Endothelial cell of umbilical vein (primary cell): ENCODE measurements at regions of chr1 and their contacts with region 1.

Region 1: DNA sequence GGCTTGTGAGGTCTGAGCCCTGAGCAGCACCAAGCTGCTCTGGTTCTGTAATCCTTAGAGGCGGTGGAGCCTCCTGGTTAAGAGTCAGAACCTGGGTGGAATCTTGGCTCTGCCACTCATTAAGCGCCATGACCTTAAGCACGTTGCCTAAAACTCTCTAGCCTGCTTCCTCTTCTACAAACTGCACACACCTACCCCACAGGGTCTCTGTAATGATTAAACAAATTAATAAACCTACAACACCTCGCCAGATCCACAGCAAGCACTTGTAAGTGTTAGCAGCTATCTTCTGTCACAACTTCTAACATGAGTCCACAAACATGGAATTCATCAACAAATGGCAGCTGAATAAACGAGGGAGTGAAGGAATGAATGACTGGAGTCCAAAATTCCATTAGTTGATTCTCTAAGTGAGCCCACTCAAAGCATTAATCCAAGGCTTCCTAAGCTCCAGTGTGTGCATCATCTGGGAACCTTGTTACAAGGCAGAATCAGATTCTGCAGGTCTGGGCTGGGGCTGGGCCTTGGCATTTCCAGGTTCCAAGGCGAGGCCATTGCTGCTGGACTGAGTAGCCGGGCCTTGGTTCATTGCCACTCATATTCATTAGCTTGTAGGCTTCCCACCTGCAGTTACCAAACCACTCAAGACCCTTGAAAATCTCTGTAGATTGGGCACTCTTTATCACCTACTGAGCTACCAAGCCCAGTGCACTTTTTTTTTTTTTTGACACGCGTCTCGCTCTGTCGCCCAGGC is 168.6 kb downstream of the HIVEP3 start:
- DNase-seq: no peak
- H3K4me3 ChIP-seq: no peak overlapping the region
- H3K27ac ChIP-seq: no peak overlapping the region
- H3K4me1 ChIP-seq: peaks cover 12% of the 10 kb centered on the region
- H3K27me3 ChIP-seq: peaks cover 0 to 1% of the 10 kb centered on the region in 2 experiments
- CTCF ChIP-seq: no peak
- POLR2A ChIP-seq: no peak

Region 2: GRCh38 chr1:41474490-41475271 is 275.5 kb before region 1 on chr1:
- CTCF ChIA-PET with region 1: no interaction called
- POLR2A ChIA-PET with region 1: no interaction called
- dilution Hi-C with region 1: no loop called
- intact Hi-C with region 1: no loop called
- DNase-seq: no peak
- H3K4me3 ChIP-seq: no peak overlapping the region
- H3K27ac ChIP-seq: no peak overlapping the region
- H3K4me1 ChIP-seq: no peaks in the 10 kb centered on the region
- H3K27me3 ChIP-seq: no peaks in the 10 kb centered on the region
- CTCF ChIP-seq: no peak
- POLR2A ChIP-seq: no peak

Region 3: GRCh38 chr1:41728403-41729202 is 21.6 kb before region 1 on chr1:
- CTCF ChIA-PET with region 1: no interaction called
- POLR2A ChIA-PET with region 1: no interaction called
- dilution Hi-C with region 1: no loop called
- intact Hi-C with region 1: loop called (anchors 2 kb)
- DNase-seq: no peak
- H3K4me3 ChIP-seq: no peak overlapping the region
- H3K27ac ChIP-seq: no peak overlapping the region
- H3K4me1 ChIP-seq: peaks cover 26% of the 10 kb centered on the region
- H3K27me3 ChIP-seq: no peaks in the 10 kb centered on the region
- CTCF ChIP-seq: no peak
- POLR2A ChIP-seq: no peak